Sigmoid colon (tissue), 7 donors: ENCODE measurements at regions of chr18 and their contacts with region 1.

Region 1: DNA sequence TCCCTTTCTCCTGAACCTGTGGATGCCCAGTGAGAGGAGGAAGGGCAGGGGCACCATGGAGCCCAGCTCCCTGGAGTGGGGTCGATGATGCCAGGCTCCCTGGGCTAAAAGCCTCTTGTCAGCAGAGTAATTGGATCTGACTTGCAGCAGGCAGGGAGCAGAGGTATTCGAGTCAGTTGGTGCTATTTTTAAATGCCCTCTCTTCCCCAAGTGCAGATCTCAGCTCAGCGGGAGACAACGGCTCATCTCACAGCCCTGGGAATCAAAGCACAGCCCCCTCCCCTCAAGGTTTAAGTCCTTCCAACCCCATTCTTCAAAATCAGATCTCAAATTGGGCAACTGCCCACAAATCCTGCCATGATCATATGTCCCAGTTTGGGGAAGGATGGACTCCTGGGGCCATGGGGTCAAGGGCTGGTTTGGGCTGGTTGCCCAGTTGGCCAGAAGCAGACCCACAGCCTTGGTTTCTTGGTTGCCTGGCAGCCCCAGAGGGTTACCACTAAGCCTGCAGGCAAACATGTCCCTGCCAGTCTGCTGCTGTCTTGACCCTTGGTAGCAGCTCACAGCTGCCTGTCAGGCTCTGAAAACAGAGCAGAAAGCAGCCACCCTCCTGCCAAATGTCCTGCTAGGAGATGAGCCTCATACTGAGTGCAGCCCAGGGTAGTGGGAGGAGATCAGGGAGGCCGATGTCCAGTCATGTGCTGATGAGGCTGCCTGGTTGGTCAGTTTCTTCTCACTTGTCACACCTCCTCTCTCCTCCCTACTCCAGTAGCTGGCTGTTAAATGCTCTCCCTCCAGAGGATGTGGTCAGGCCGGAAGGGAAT is 244.9 kb downstream of the LOXHD1 start:
- DNase-seq: peak; percentile 84
- H3K4me3 ChIP-seq: no peak overlapping the region
- H3K27ac ChIP-seq: peak overlapping the region; percentile 74 to 81 (median 78)
- H3K4me1 ChIP-seq: peaks cover 0 to 59% (median 48%) of the 10 kb centered on the region in 4 donors
- H3K27me3 ChIP-seq: no peaks in the 10 kb centered on the region
- CTCF ChIP-seq: no peak
- EP300 ChIP-seq: no peak
- POLR2A ChIP-seq: no peak

Region 2: GRCh38 chr18:46182633-46183358 is 229.3 kb before region 1 on chr18:
- intact Hi-C with region 1: loop called (anchors 10 kb)
- DNase-seq: no peak
- H3K4me3 ChIP-seq: no peak overlapping the region
- H3K27ac ChIP-seq: peak overlapping the region in 1 of 4 donors; percentile 11
- H3K4me1 ChIP-seq: peaks cover 0 to 41% (median 24%) of the 10 kb centered on the region in 4 donors
- H3K27me3 ChIP-seq: no peaks in the 10 kb centered on the region
- CTCF ChIP-seq: no peak
- EP300 ChIP-seq: no peak
- POLR2A ChIP-seq: no peak

Region 3: DNA sequence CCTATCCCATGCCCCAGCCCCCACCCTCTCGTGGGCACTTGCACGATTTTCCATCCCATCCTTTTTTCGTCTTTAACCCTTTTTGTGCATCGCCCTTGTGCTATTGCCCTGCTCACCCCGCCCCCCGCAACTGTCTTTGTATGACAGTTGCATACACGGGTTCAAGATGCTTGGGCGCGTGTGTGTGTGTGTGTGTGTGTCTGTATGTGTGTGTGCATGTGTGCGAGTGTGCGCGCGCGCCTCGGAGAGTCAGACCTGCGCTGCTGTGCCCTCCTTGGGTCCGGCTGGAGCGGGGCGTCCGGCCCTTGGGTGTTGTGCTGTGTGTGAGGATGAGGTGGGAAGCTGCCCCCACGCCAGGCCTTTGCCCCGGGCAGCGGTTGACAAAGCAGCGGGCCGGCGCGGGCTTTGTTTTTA is 77.2 kb before region 1 on chr18:
- intact Hi-C with region 1: loop called (anchors 5 kb)
- DNase-seq: peak; percentile 64
- H3K4me3 ChIP-seq: peak overlapping the region; percentile 38 to 72 (median 63)
- H3K27ac ChIP-seq: peak overlapping the region in 3 of 4 donors; percentile 55 to 71 (median 66)
- H3K4me1 ChIP-seq: peaks cover 0 to 45% (median 32%) of the 10 kb centered on the region in 4 donors
- H3K27me3 ChIP-seq: peaks cover 0 to 5% (median 5%) of the 10 kb centered on the region in 3 donors
- CTCF ChIP-seq: no peak
- EP300 ChIP-seq: no peak
- POLR2A ChIP-seq: no peak